CD4-positive, alpha-beta T cell (primary cell): ENCODE measurements at regions of chr17 and their contacts with region 1.

Region 1: DNA sequence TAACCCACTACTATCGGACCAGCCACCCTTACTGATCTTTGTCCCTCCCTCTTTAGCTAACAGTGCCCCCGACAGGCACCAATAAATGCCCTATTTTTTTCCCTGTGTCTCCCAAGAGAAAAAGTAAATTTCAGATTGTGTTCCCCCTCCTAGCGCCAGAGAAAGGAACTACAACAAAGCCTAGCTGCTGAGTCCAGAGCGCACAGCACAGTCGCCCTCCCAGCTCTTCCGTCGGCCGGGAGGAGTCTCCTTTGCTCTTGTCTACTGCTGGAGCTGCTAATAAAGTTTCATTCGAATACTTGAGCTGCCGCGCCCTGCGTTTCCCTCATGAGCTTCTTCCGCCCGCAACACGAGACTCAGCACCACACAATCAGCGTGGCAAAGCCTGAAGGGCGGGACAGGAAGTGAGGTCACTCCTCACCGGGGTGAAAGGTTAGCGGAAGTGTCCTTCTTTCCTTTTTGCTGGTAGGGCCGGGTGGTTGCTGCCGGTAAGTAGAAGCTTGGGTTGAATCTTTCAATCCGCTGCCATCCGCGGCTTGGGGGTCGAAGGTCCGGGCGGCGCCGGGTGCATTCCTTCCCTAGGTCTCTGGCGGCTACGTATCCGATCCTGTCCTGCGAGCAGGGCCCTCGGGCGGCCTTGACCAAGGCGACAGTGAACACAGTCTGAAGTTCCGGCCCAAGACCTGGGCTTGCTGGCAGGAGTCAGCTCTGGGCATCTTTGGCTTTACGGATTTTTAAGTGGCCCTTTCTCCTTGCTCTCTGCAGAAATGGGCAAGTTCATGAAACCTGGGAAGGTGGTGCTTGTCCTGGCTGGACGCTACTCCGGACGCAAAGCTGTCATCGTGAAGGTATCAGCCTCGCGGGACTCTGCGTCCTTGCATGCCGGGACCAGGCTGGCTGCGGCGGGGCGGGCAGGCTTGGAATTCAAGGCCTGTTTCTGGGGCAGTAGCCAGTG is at the start of gene RPL27:
- DNase-seq: peak; percentile 95 to 100 (median 98)
- ATAC-seq: peak; percentile 95
- H3K4me3 ChIP-seq: peak within 1 kb of the TSS; percentile 91
- H3K4me3 Mint-ChIP-seq: peak within 1 kb of the TSS; percentile 96
- H3K27ac ChIP-seq: peak within 1 kb of the TSS; percentile 73 to 98
- H3K27ac Mint-ChIP-seq: peak within 1 kb of the TSS; percentile 95
- H3K4me1 ChIP-seq: peaks cover 28% of the 10 kb centered on the region
- H3K4me1 Mint-ChIP-seq: peaks cover 25% of the 10 kb centered on the region
- H3K27me3 ChIP-seq: no peaks in the 10 kb centered on the region
- H3K27me3 Mint-ChIP-seq: no peaks in the 10 kb centered on the region
- CTCF ChIP-seq: peak; percentile 85
- total RNA-seq, gene RPL27: 1,923 to 1,951 TPM

Region 2: DNA sequence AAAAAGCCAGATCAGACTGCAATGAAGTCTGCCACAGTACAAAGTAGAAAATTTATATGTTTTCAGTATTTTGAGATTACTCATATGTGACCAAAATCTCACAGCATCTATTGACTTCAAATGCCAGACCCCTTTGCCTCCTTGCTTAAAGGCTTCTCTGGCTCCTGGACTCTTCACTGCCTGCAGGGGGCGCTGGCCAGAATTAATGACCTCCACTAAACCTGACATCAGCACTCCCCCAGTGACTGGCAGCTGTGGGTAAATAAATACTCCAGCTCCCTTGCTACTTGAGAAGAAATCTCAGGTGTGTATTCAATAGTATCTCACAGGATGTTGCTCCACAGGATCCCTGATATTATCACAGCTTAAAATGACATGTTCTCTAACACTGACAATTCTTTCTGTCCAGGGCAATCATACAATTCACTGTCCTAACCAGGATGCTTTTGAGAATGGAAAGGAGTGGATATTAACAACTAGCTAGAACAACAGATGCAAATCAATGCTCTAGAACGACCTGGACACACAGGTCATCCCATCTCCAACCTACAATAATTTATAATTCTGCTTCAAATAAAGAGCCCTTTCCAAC is 178.2 kb before region 1 on chr17:
- CTCF ChIA-PET with region 1: interaction called, 7 read pairs
- POLR2A ChIA-PET with region 1: interaction called, 13 read pairs
- intact Hi-C with region 1: no loop called
- DNase-seq: peak; percentile 29 to 79 (median 48)
- ATAC-seq: no peak
- H3K4me3 ChIP-seq: no peak overlapping the region
- H3K4me3 Mint-ChIP-seq: peak overlapping the region; percentile 43
- H3K27ac ChIP-seq: no peak overlapping the region
- H3K27ac Mint-ChIP-seq: peak overlapping the region; percentile 49
- H3K4me1 ChIP-seq: peaks cover 22% of the 10 kb centered on the region
- H3K4me1 Mint-ChIP-seq: peaks cover 28% of the 10 kb centered on the region
- H3K27me3 ChIP-seq: no peaks in the 10 kb centered on the region
- H3K27me3 Mint-ChIP-seq: no peaks in the 10 kb centered on the region
- CTCF ChIP-seq: peak; percentile 72

Region 3: DNA sequence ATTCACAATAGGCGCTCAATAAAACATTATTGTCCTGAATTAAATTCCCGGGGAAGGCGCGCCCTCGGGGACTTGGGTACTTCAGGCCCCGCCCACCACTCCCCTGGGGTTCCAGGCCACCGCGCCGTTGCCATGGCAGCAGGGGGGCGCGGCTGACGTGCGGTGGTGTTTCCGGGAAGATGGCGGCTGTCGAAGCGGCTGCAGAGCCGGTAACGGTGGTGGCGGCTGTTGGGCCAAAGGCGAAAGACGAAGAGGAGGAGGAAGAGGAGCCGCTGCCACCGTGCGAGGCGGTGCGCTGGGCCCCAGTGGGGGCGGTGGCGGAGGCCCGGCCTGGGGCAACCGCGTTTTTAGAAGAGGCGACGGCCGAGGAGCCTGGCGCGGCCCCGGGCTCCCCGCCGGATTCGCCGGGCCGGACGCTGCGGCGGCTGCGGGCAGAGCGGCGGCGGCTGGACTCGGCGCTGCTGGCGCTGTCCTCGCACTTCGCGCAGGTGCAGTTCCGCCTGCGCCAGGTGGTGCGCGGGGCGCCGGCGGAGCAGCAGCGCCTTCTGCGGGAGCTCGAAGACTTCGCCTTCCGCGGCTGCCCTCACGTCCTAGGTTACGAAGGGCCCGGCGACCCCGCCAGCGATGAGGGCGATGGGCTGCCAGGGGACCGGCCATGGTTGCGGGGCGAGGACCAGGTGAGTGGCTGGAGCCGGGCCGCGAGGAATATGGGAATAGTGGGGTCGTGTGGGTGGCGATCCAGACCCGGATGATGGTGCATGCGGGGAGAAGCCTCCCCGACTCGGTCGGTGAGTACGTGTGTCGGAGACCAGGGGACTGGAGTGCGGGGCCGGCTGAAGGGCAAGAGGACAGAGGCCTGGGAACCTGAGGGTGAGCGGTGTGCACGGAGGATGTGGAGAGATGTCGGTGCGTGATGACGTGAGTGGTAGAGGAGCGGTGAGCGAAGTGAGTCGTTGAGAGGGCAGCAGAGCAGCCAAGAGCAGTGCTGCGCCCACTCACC is 17.6 kb before region 1 on chr17 and contains the start of gene RUNDC1:
- CTCF ChIA-PET with region 1: interaction called, 20 read pairs
- POLR2A ChIA-PET with region 1: interaction called, 33 read pairs
- intact Hi-C with region 1: loop called (anchors 1 kb)
- DNase-seq: peak; percentile 79 to 96 (median 88)
- ATAC-seq: peak; percentile 86
- H3K4me3 ChIP-seq: peak within 1 kb of the TSS; percentile 87
- H3K4me3 Mint-ChIP-seq: peak within 1 kb of the TSS; percentile 95
- H3K27ac ChIP-seq: peak within 1 kb of the TSS; percentile 58 to 66
- H3K27ac Mint-ChIP-seq: peak within 1 kb of the TSS; percentile 84
- H3K4me1 ChIP-seq: peaks cover 32% of the 10 kb centered on the region
- H3K4me1 Mint-ChIP-seq: peaks cover 44% of the 10 kb centered on the region
- H3K27me3 ChIP-seq: no peaks in the 10 kb centered on the region
- H3K27me3 Mint-ChIP-seq: no peaks in the 10 kb centered on the region
- CTCF ChIP-seq: no peak
- total RNA-seq, gene RUNDC1: 11.6 to 11.7 TPM

Region 4: DNA sequence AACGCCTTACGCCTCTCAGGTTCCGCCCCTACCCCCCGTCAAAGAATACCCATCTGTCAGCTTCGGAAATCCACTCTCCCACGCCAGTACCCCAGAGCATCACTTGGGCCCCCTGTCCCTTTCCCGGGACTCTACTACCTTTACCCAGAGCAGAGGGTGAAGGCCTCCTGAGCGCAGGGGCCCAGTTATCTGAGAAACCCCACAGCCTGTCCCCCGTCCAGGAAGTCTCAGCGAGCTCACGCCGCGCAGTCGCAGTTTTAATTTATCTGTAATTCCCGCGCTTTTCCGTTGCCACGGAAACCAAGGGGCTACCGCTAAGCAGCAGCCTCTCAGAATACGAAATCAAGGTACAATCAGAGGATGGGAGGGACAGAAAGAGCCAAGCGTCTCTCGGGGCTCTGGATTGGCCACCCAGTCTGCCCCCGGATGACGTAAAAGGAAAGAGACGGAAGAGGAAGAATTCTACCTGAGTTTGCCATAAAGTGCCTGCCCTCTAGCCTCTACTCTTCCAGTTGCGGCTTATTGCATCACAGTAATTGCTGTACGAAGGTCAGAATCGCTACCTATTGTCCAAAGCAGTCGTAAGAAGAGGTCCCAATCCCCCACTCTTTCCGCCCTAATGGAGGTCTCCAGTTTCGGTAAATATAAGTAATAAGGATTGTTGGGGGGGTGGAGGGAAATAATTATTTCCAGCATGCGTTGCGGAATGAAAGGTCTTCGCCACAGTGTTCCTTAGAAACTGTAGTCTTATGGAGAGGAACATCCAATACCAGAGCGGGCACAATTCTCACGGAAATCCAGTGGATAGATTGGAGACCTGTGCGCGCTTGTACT is 127.1 kb after region 1 on chr17 and contains the start of gene BRCA1:
- CTCF ChIA-PET with region 1: interaction called, 4 read pairs
- POLR2A ChIA-PET with region 1: interaction called, 4 read pairs
- intact Hi-C with region 1: loop called (anchors 1 to 2 kb)
- DNase-seq: peak; percentile 86 to 99 (median 90)
- ATAC-seq: peak; percentile 99
- H3K4me3 ChIP-seq: peak within 1 kb of the TSS; percentile 77
- H3K4me3 Mint-ChIP-seq: peak within 1 kb of the TSS; percentile 86
- H3K27ac ChIP-seq: peak within 1 kb of the TSS; percentile 55 to 83
- H3K27ac Mint-ChIP-seq: peak within 1 kb of the TSS; percentile 71
- H3K4me1 ChIP-seq: peaks cover 18% of the 10 kb centered on the region
- H3K4me1 Mint-ChIP-seq: peaks cover 23% of the 10 kb centered on the region
- H3K27me3 ChIP-seq: no peaks in the 10 kb centered on the region
- H3K27me3 Mint-ChIP-seq: no peaks in the 10 kb centered on the region
- CTCF ChIP-seq: no peak
- total RNA-seq, gene BRCA1: 1.2 to 1.3 TPM

Region 5: DNA sequence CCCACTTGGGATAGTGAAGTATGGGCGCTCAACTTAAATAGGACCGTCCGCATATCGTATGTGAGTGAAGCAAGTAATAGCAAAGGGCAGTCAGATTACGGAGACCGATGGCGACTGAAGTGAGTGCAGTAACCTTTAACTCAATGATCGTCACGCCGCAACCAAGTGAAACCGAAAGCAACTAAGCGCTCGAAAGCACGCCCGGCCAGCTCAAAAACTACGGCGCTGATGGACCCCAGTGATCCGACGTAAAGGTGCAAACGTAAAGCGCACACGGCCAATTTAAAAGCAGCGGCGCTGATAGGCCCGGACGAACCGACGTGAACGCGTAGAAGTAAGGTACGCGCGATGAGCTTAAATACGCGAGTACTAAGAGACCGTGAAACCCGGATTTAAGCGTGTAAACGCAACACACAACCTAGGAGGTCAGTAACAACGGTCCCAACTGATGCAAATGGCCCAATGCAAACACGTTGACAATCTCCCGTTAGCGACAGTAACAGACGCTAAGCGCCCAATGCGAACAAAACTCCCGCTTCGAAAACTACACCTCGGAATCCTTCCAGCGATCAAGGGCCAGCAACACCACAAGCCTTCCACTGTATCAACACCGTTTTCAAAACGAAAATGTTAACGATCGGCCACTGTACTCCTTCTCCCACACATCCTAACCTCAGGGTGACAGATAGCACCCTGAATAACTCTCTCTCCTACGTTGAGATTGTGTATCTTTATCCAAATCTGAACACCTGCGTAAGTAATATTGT is 362.7 kb after region 1 on chr17:
- CTCF ChIA-PET with region 1: no interaction called
- POLR2A ChIA-PET with region 1: interaction called, 39 read pairs
- intact Hi-C with region 1: no loop called
- DNase-seq: peak; percentile 74 to 99 (median 86)
- ATAC-seq: peak; percentile 75
- H3K4me3 ChIP-seq: peak overlapping the region; percentile 63
- H3K4me3 Mint-ChIP-seq: peak overlapping the region; percentile 93
- H3K27ac ChIP-seq: peak overlapping the region; percentile 94 to 96
- H3K27ac Mint-ChIP-seq: peak overlapping the region; percentile 97
- H3K4me1 ChIP-seq: peaks cover 22% of the 10 kb centered on the region
- H3K4me1 Mint-ChIP-seq: peaks cover 15% of the 10 kb centered on the region
- H3K27me3 ChIP-seq: no peaks in the 10 kb centered on the region
- H3K27me3 Mint-ChIP-seq: peaks cover 5% of the 10 kb centered on the region
- CTCF ChIP-seq: no peak

Region 6: GRCh38 chr17:43483674-43484372 is 485.6 kb after region 1 on chr17 and contains the start of gene DHX8:
- CTCF ChIA-PET with region 1: interaction called, 11 read pairs
- POLR2A ChIA-PET with region 1: interaction called, 12 read pairs
- intact Hi-C with region 1: loop called (anchors 2 to 10 kb)
- DNase-seq: peak; percentile 95 to 99 (median 99)
- ATAC-seq: peak; percentile 97
- H3K4me3 ChIP-seq: peak within 1 kb of the TSS; percentile 88
- H3K4me3 Mint-ChIP-seq: peak within 1 kb of the TSS; percentile 99
- H3K27ac ChIP-seq: peak within 1 kb of the TSS; percentile 37 to 70
- H3K27ac Mint-ChIP-seq: peak within 1 kb of the TSS; percentile 96
- H3K4me1 ChIP-seq: peaks cover 29% of the 10 kb centered on the region
- H3K4me1 Mint-ChIP-seq: peaks cover 36% of the 10 kb centered on the region
- H3K27me3 ChIP-seq: no peaks in the 10 kb centered on the region
- H3K27me3 Mint-ChIP-seq: no peaks in the 10 kb centered on the region
- CTCF ChIP-seq: peak; percentile 100
- total RNA-seq, gene DHX8: 88.8 to 106 TPM